CD4-positive, alpha-beta T cell (primary cell): ENCODE measurements at regions of chr15 and their contacts with region 1.

Region 1: GRCh38 chr15:57561041-57561711 is 30.5 kb upstream of the MYZAP start:
- DNase-seq: peak; percentile 33 to 80 (median 47)
- ATAC-seq: peak; percentile 70
- H3K4me3 ChIP-seq: no peak overlapping the region
- H3K4me3 Mint-ChIP-seq: no peak overlapping the region
- H3K27ac ChIP-seq: no peak overlapping the region
- H3K27ac Mint-ChIP-seq: no peak overlapping the region
- H3K4me1 ChIP-seq: peaks cover 19% of the 10 kb centered on the region
- H3K4me1 Mint-ChIP-seq: peaks cover 36% of the 10 kb centered on the region
- H3K27me3 ChIP-seq: no peaks in the 10 kb centered on the region
- H3K27me3 Mint-ChIP-seq: no peaks in the 10 kb centered on the region
- CTCF ChIP-seq: peak; percentile 90

Region 2: GRCh38 chr15:56892659-56893356 is 668.4 kb before region 1 on chr15:
- CTCF ChIA-PET with region 1: no interaction called
- POLR2A ChIA-PET with region 1: no interaction called
- intact Hi-C with region 1: no loop called
- DNase-seq: no peak
- ATAC-seq: no peak
- H3K4me3 ChIP-seq: no peak overlapping the region
- H3K4me3 Mint-ChIP-seq: no peak overlapping the region
- H3K27ac ChIP-seq: no peak overlapping the region
- H3K27ac Mint-ChIP-seq: no peak overlapping the region
- H3K4me1 ChIP-seq: peaks cover 3% of the 10 kb centered on the region
- H3K4me1 Mint-ChIP-seq: peaks cover 15% of the 10 kb centered on the region
- H3K27me3 ChIP-seq: no peaks in the 10 kb centered on the region
- H3K27me3 Mint-ChIP-seq: no peaks in the 10 kb centered on the region
- CTCF ChIP-seq: no peak

Region 3: DNA sequence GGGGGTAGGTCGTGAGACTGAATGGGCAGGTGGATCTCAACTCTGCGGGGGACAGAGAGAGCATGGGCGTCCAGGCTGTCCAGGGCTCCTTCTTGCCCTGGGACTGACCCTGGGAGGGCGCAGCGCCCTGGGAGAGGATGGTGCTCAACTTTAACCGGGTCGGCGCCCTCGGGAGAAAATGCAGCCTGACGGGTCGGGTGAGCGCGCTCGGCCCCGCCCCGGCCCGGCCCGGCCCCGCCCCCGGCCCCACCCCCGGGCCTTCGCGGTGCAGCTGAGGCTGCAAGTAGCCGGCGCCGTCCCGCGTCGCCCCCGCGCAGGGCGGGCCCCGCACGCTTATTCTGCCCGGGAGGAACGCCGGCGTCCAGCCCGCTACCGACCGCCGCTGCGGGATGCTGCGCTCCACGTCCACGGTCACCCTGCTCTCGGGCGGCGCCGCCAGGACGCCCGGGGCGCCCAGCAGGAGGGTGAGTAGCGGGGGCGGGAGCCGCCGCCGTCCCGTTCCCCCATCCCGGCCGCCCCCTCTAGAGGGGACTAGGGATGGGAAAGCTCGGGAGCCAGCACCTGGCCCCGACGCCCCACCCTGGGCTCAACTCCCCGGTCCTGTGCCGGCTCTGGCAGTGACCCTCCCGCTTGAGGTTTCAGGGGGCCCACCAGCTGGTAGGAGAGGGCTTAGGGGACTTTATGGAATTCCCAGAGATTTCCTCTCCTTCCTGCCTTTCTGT is 30.6 kb after region 1 on chr15 and contains the start of gene MYZAP:
- CTCF ChIA-PET with region 1: interaction called, 3 read pairs
- POLR2A ChIA-PET with region 1: interaction called, 3 read pairs
- intact Hi-C with region 1: loop called in 1 of 2 experiments (anchors 5 kb)
- DNase-seq: peak; percentile 8 to 75 (median 44)
- ATAC-seq: peak; percentile 73
- H3K4me3 ChIP-seq: peak within 1 kb of the TSS; percentile 40
- H3K4me3 Mint-ChIP-seq: peak within 1 kb of the TSS; percentile 80
- H3K27ac ChIP-seq: no peak within 1 kb of the TSS
- H3K27ac Mint-ChIP-seq: peak within 1 kb of the TSS; percentile 32
- H3K4me1 ChIP-seq: peaks cover 21% of the 10 kb centered on the region
- H3K4me1 Mint-ChIP-seq: peaks cover 42% of the 10 kb centered on the region
- H3K27me3 ChIP-seq: peaks cover 8 to 10% of the 10 kb centered on the region in 2 experiments
- H3K27me3 Mint-ChIP-seq: peaks cover 18% of the 10 kb centered on the region
- CTCF ChIP-seq: no peak
- total RNA-seq, gene MYZAP: 0.66 to 1.1 TPM

Region 4: GRCh38 chr15:57640935-57641682 is 79.9 kb after region 1 on chr15:
- CTCF ChIA-PET with region 1: no interaction called
- POLR2A ChIA-PET with region 1: no interaction called
- intact Hi-C with region 1: loop called in 1 of 2 experiments (anchors 5 kb)
- DNase-seq: peak in 3 of 14 experiments; percentile 17 to 34 (median 23)
- ATAC-seq: peak; percentile 24
- H3K4me3 ChIP-seq: no peak overlapping the region
- H3K4me3 Mint-ChIP-seq: no peak overlapping the region
- H3K27ac ChIP-seq: no peak overlapping the region
- H3K27ac Mint-ChIP-seq: no peak overlapping the region
- H3K4me1 ChIP-seq: no peaks in the 10 kb centered on the region
- H3K4me1 Mint-ChIP-seq: no peaks in the 10 kb centered on the region
- H3K27me3 ChIP-seq: no peaks in the 10 kb centered on the region
- H3K27me3 Mint-ChIP-seq: peaks cover 4% of the 10 kb centered on the region
- CTCF ChIP-seq: peak; percentile 27

Region 5: DNA sequence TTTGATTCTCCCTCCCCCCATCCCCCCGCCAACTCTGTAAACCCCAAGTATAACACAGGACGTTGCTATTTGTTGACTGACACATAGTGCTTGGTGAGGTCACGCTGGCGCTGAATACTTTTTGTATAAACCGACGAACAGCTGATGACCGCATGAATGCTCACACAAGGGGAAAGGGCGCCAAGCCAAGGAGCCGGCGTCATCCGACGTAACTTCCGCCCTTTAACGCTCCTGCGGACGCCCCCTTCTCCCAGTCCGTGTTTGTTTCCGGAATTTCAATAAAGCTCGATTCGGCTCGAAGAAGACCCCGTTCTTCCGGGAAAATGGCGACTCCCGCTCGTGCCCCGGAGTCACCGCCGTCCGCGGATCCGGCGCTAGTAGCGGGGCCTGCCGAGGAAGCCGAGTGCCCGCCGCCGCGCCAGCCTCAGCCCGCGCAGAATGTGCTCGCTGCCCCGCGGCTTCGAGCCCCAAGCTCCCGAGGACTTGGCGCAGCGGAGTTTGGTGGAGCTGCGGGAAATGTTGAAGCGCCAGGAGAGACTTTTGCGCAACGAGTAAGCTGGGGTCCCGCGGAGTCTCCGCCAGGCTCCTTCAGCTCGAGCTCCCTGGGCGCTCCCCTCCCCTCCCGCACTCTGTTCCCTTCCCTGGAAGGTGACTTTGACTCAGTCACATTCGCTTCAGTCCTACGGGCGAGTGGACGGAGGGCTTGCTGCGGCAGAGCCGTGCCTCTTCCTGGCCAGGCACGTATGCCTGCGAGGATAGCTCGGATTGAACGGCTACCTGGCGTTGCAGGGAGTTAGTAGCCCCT is 145.4 kb after region 1 on chr15 and contains the start of gene POLR2M:
- CTCF ChIA-PET with region 1: interaction called, 4 read pairs
- POLR2A ChIA-PET with region 1: interaction called, 5 read pairs
- intact Hi-C with region 1: loop called (anchors 5 kb)
- DNase-seq: peak; percentile 78 to 98 (median 86)
- ATAC-seq: peak; percentile 88
- H3K4me3 ChIP-seq: peak within 1 kb of the TSS; percentile 90
- H3K4me3 Mint-ChIP-seq: peak within 1 kb of the TSS; percentile 85
- H3K27ac ChIP-seq: peak within 1 kb of the TSS; percentile 87 to 95
- H3K27ac Mint-ChIP-seq: peak within 1 kb of the TSS; percentile 99
- H3K4me1 ChIP-seq: peaks cover 35% of the 10 kb centered on the region
- H3K4me1 Mint-ChIP-seq: peaks cover 93% of the 10 kb centered on the region
- H3K27me3 ChIP-seq: no peaks in the 10 kb centered on the region
- H3K27me3 Mint-ChIP-seq: no peaks in the 10 kb centered on the region
- CTCF ChIP-seq: no peak
- total RNA-seq, gene POLR2M: 88.5 to 109 TPM

Region 6: GRCh38 chr15:57861036-57861638 is 300.0 kb after region 1 on chr15:
- CTCF ChIA-PET with region 1: interaction called, 18 read pairs
- POLR2A ChIA-PET with region 1: no interaction called
- intact Hi-C with region 1: loop called (anchors 1 kb)
- DNase-seq: peak in 6 of 14 experiments; percentile 7 to 74 (median 48)
- ATAC-seq: no peak
- H3K4me3 ChIP-seq: no peak overlapping the region
- H3K4me3 Mint-ChIP-seq: no peak overlapping the region
- H3K27ac ChIP-seq: no peak overlapping the region
- H3K27ac Mint-ChIP-seq: no peak overlapping the region
- H3K4me1 ChIP-seq: no peaks in the 10 kb centered on the region
- H3K4me1 Mint-ChIP-seq: no peaks in the 10 kb centered on the region
- H3K27me3 ChIP-seq: peaks cover 0 to 4% of the 10 kb centered on the region in 2 experiments
- H3K27me3 Mint-ChIP-seq: peaks cover 10% of the 10 kb centered on the region
- CTCF ChIP-seq: peak; percentile 96

Region 7: DNA sequence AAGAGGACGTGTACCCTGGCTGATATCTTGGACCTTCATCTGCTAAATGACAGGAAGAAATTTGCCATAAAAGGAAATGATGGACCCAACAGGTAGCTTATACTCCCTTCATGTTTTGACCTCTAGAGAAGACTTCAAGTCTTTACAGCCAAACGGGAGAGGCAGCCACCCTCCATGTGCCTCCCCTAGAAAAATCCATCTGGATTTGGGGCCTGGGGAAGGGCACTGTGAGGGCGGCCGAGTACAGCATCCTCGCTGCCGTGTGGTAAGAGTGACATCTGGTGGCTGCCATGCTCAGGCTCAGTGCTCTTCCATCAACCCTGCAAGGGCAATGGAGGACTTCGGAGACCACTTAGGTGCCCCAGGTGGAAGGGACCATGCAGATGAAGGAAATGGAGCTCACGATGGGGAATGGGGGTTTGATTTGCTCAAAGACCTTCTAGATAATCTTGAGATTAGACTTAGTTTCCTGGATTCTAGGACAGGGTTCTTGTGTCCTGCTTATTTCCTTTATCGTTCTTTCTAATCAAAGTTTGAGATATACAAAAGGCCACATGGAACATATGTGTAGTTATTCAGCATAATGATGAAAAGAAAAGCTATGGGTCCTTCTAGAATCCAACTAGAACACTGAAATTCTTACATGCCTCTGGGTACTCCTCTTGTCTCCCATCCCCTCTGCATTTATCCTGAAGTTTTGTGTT is 621.4 kb after region 1 on chr15:
- CTCF ChIA-PET with region 1: no interaction called
- POLR2A ChIA-PET with region 1: no interaction called
- intact Hi-C with region 1: loop called in 1 of 2 experiments (anchors 5 kb)
- DNase-seq: peak in 4 of 14 experiments; percentile 2 to 52 (median 36)
- ATAC-seq: no peak
- H3K4me3 ChIP-seq: no peak overlapping the region
- H3K4me3 Mint-ChIP-seq: no peak overlapping the region
- H3K27ac ChIP-seq: no peak overlapping the region
- H3K27ac Mint-ChIP-seq: no peak overlapping the region
- H3K4me1 ChIP-seq: peaks cover 4% of the 10 kb centered on the region
- H3K4me1 Mint-ChIP-seq: peaks cover 7% of the 10 kb centered on the region
- H3K27me3 ChIP-seq: peaks cover 8 to 20% of the 10 kb centered on the region in 2 experiments
- H3K27me3 Mint-ChIP-seq: peaks cover 38% of the 10 kb centered on the region
- CTCF ChIP-seq: peak; percentile 34